ENCODE measurements at regions of chr19 and their contacts with region 1.

Region 1: GRCh38 chr19:46025835-46026234 is 3.0 kb upstream of the PGLYRP1 start:
- DNase-seq: no peak
- H3K4me3 ChIP-seq: no peak overlapping the region
- H3K27ac ChIP-seq: no peak overlapping the region
- H3K4me1 ChIP-seq: no peaks in the 10 kb centered on the region
- H3K27me3 ChIP-seq: peaks cover 16% of the 10 kb centered on the region; the same call in 1 of the 2 replicates

Region 2: GRCh38 chr19:46265217-46265828 is 239.5 kb after region 1 on chr19:
- in situ Hi-C with region 1: loop called (anchors 5 kb)
- DNase-seq: peak; percentile 84
- H3K4me3 ChIP-seq: no peak overlapping the region
- H3K27ac ChIP-seq: no peak overlapping the region
- H3K4me1 ChIP-seq: no peaks in the 10 kb centered on the region
- H3K27me3 ChIP-seq: peaks cover 21% of the 10 kb centered on the region

Measured in GM23248 (cell line).